ENCODE measurements at regions of chr2 and their contacts with region 1.

Region 1: GRCh38 chr2:25314514-25315315 is 27.0 kb downstream of the DNMT3A start:
- DNase-seq: peak; percentile 98
- ATAC-seq: peak; percentile 81
- H3K4me3 Mint-ChIP-seq: peak overlapping the region; percentile 88
- H3K27ac Mint-ChIP-seq: peak overlapping the region; percentile 96
- H3K4me1 Mint-ChIP-seq: peaks cover 63% of the 10 kb centered on the region
- H3K27me3 Mint-ChIP-seq: no peaks in the 10 kb centered on the region
- CTCF ChIP-seq: no peak

Region 2: GRCh38 chr2:25294573-25295462 is 19.9 kb before region 1 on chr2:
- CTCF ChIA-PET with region 1: interaction called, 12 read pairs
- POLR2A ChIA-PET with region 1: interaction called, 20 read pairs
- intact Hi-C with region 1: no loop called
- DNase-seq: peak; percentile 90
- ATAC-seq: peak; percentile 94
- H3K4me3 Mint-ChIP-seq: peak overlapping the region; percentile 63
- H3K27ac Mint-ChIP-seq: peak overlapping the region; percentile 89
- H3K4me1 Mint-ChIP-seq: peaks cover 71% of the 10 kb centered on the region
- H3K27me3 Mint-ChIP-seq: no peaks in the 10 kb centered on the region
- CTCF ChIP-seq: no peak

Region 3: DNA sequence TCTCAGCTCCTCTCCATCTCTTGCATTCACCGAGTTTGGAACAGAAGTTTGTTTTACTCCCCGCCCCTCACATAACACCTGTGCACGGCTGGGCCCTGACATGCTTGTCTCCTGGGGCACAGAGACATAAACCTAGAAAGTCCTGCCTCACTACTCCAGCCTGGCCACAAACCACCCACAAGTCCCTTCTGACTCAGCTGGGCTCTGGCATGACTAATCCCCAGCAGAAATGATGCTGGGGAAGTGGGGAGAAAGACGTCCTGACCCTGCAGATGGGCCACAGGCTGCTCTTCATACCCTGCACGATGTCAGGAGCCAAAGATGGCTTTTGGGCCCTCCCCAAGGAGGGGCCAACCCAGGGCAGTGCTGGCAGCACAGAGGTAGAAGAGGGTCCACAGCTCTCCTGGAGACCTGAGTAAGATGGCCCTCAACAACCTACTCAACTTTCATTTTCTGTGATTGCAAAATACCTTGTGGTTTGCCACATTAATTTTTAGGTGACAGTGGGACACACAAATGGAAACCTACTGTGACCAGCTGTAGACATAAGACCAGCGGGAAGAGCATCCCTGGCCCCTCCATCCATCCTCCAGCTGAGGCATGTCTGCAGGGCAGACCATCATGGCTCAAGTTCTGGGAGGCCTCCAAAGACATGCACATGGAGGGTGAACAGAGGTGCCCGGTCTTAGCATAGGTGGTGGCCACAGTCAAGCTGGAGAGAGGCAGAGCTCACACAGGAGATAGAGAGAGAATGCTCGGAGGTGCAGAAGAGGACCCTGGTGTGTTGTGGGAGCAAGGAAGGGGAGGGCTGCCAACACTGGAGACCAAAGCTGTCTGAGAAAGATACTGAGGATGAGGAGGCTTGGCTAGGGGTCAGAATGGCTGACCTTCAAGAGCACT is 13.0 kb before region 1 on chr2:
- CTCF ChIA-PET with region 1: interaction called, 7 read pairs
- POLR2A ChIA-PET with region 1: interaction called, 54 read pairs
- intact Hi-C with region 1: no loop called
- DNase-seq: peak; percentile 94
- ATAC-seq: peak; percentile 97
- H3K4me3 Mint-ChIP-seq: peak overlapping the region; percentile 17
- H3K27ac Mint-ChIP-seq: peak overlapping the region; percentile 63
- H3K4me1 Mint-ChIP-seq: peaks cover 81% of the 10 kb centered on the region
- H3K27me3 Mint-ChIP-seq: no peaks in the 10 kb centered on the region
- CTCF ChIP-seq: no peak

Region 4: DNA sequence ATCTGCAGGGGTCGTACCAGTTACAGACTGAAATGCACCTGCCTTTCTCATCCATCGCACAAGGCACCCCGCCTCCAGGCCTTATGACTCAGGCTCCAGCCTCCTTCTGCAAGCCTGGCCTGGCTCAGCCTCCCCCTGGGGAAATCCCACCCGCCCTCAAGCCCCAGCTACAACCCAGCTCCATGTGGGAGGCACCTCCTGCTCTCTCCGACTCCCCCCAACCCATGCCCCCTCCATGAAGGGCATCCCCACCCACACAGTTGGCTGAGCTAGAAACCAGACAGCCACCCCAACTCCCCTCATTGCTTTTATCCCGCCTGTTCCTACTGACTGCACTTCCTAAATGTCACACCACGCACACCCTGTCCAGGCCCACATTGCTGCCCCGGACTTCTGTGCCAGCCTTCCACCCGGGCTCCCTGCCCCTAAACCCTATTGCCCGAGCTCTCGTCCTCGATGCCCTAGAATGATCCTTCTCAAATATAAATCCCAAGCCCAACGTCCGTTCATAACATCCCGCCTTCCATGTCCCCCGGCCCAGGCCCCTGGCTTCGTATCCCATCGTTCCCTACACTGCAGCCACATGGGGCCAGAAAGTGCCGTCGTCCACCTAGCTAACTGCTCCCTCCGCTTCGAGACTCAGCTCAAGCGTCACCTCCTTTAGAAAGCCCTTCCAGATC is 17.1 kb after region 1 on chr2:
- CTCF ChIA-PET with region 1: interaction called, 11 read pairs
- POLR2A ChIA-PET with region 1: interaction called, 51 read pairs
- intact Hi-C with region 1: loop called (anchors 2 kb)
- DNase-seq: peak; percentile 89
- ATAC-seq: peak; percentile 91
- H3K4me3 Mint-ChIP-seq: no peak overlapping the region
- H3K27ac Mint-ChIP-seq: peak overlapping the region; percentile 80
- H3K4me1 Mint-ChIP-seq: peaks cover 71% of the 10 kb centered on the region
- H3K27me3 Mint-ChIP-seq: no peaks in the 10 kb centered on the region
- CTCF ChIP-seq: no peak

Region 5: DNA sequence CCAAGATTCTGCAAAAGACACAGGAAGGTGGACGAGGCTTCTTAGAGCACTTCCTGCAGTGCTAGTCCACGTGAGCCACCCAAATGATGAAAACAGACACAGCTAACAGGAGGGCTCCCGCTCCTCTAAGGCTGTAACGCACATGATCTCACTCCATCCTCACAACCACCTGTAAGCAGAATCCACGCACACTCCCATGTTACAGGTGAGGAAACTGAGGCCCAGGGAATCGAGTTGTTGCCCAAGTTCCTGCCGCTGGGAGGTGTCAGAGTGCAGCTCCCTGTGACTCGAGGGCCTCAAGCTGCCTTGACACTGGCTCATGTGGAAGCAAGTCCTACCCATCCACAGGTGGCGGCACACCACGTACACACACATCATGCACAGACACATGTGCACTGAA is 22.6 kb after region 1 on chr2:
- CTCF ChIA-PET with region 1: interaction called, 16 read pairs
- POLR2A ChIA-PET with region 1: interaction called, 51 read pairs
- intact Hi-C with region 1: loop called (anchors 2 kb)
- DNase-seq: peak; percentile 51
- ATAC-seq: peak; percentile 21
- H3K4me3 Mint-ChIP-seq: peak overlapping the region; percentile 24
- H3K27ac Mint-ChIP-seq: peak overlapping the region; percentile 76
- H3K4me1 Mint-ChIP-seq: peaks cover 72% of the 10 kb centered on the region
- H3K27me3 Mint-ChIP-seq: no peaks in the 10 kb centered on the region
- CTCF ChIP-seq: no peak

Region 6: GRCh38 chr2:25342372-25343186 is 27.9 kb after region 1 on chr2:
- CTCF ChIA-PET with region 1: interaction called, 16 read pairs
- POLR2A ChIA-PET with region 1: interaction called, 51 read pairs
- intact Hi-C with region 1: no loop called
- DNase-seq: peak; percentile 88
- ATAC-seq: peak; percentile 84
- H3K4me3 Mint-ChIP-seq: peak overlapping the region; percentile 76
- H3K27ac Mint-ChIP-seq: peak overlapping the region; percentile 80
- H3K4me1 Mint-ChIP-seq: peaks cover 54% of the 10 kb centered on the region
- H3K27me3 Mint-ChIP-seq: no peaks in the 10 kb centered on the region
- CTCF ChIP-seq: peak; percentile 97

Region 7: DNA sequence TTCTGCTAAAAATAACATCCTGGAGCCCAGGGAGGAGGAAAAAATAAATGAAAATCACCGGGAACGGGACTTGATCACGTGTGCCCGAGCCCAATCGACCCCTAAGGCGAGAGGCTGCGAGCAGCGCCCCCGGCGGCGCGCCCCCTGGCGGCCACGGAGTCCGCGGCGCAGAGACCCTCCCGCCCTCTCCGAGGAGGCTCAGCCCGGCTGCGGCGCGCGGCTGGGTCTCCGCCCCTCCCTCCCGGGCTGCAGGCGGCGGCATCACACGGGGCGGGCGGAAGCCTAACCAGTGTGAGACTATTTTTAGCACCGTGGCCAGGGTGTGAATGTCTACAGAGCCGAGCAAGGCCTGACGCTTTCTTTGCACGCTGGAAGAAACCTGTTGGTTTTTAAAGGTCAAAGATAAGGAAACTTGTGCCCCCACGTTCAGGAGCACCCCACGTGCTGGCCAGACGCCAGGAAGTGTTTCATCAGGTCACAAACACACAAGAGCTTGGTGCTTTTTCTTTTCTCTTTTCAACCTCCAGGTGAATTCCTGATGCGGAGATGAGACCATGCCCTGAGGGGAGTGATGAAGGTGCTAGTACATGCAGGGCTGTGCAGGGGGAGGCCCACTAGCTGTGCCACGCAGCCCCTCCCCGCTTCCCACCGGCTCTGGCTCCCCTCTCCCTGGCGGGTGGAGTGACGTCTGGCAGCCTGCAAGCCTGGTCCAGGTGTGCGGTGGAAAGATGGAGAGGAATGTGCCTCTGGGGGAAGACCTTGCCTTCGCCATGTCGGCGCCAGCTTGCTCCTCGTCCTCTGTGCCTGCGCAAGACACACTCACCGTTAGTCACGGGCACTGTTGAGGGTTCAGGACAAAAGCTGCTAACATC is 62.3 kb after region 1 on chr2:
- CTCF ChIA-PET with region 1: interaction called, 22 read pairs
- POLR2A ChIA-PET with region 1: interaction called, 6 read pairs
- intact Hi-C with region 1: no loop called
- DNase-seq: peak; percentile 99
- ATAC-seq: peak; percentile 97
- H3K4me3 Mint-ChIP-seq: peak overlapping the region; percentile 79
- H3K27ac Mint-ChIP-seq: peak overlapping the region; percentile 97
- H3K4me1 Mint-ChIP-seq: peaks cover 42% of the 10 kb centered on the region
- H3K27me3 Mint-ChIP-seq: no peaks in the 10 kb centered on the region
- CTCF ChIP-seq: peak; percentile 95

Region 8: GRCh38 chr2:25400576-25401216 is 86.0 kb after region 1 on chr2:
- CTCF ChIA-PET with region 1: no interaction called
- POLR2A ChIA-PET with region 1: no interaction called
- intact Hi-C with region 1: no loop called
- DNase-seq: no peak
- ATAC-seq: no peak
- H3K4me3 Mint-ChIP-seq: no peak overlapping the region
- H3K27ac Mint-ChIP-seq: no peak overlapping the region
- H3K4me1 Mint-ChIP-seq: peaks cover 26% of the 10 kb centered on the region
- H3K27me3 Mint-ChIP-seq: no peaks in the 10 kb centered on the region
- CTCF ChIP-seq: no peak

Region 9: GRCh38 chr2:25548601-25549000 is 233.9 kb after region 1 on chr2:
- CTCF ChIA-PET with region 1: no interaction called
- POLR2A ChIA-PET with region 1: no interaction called
- intact Hi-C with region 1: no loop called
- DNase-seq: no peak
- ATAC-seq: no peak
- H3K4me3 Mint-ChIP-seq: no peak overlapping the region
- H3K27ac Mint-ChIP-seq: no peak overlapping the region
- H3K4me1 Mint-ChIP-seq: peaks cover 6% of the 10 kb centered on the region
- H3K27me3 Mint-ChIP-seq: no peaks in the 10 kb centered on the region
- CTCF ChIP-seq: no peak

Measured in activated CD8-positive, alpha-beta T cell treated with anti-CD3 and anti-CD28 coated beads for 36 hours (primary cell).